ENCODE measurements at regions of chr11 and their contacts with region 1.

Region 1: DNA sequence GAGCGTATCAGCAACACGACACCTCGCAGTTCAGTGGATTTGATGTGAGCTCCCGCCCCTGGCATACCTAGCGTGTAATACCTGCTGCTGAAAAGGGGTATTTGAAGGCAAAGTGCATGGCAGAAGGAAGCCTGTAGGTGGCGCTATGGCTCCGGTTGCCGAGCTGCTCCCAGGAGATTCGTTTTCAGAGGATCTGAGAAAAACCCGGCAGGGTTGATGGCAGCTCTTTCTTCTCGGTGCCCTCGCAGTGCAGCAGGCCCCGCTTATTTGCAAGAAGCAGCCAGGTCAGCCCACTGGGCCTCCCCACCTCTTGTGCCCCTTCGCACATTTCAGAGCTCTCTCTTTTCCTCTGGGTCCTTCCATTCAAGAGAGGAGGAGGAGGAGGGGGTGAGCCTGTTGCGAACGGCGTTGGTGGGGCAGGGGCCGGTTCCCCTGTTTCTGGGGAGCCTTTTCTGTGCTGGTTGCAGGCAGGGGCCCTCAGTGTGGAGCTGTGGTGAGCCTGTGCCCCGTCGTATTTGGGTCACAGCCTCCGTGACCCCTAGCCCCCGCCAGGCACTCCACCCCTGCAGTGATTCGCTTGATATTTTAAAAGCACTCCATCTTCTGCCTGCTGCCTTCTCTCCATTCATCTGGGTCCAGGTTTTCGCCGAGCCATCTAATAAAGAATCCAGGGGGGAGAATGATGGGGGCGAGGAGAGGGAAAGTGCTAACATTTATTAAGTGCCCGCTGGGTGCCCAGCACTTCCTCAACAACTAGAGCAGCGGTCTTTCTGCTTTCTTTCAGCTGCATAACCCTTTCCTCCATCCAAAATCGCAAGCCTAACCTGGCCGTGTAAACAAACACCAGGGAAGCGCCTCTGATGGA is 85.3 kb upstream of the SYT13 start:
- DNase-seq: peak; percentile 63
- H3K4me3 Mint-ChIP-seq: no peak overlapping the region
- H3K27ac Mint-ChIP-seq: no peak overlapping the region
- H3K4me1 Mint-ChIP-seq: no peaks in the 10 kb centered on the region
- H3K27me3 Mint-ChIP-seq: peaks cover 9% of the 10 kb centered on the region

Region 2: GRCh38 chr11:45355706-45356041 is 15.8 kb before region 1 on chr11:
- CTCF ChIA-PET with region 1: interaction called, 15 read pairs
- POLR2A ChIA-PET with region 1: no interaction called
- DNase-seq: no peak
- H3K4me3 Mint-ChIP-seq: peak overlapping the region; percentile 64
- H3K27ac Mint-ChIP-seq: peak overlapping the region; percentile 51
- H3K4me1 Mint-ChIP-seq: peaks cover 15% of the 10 kb centered on the region
- H3K27me3 Mint-ChIP-seq: peaks cover 7% of the 10 kb centered on the region

Region 3: GRCh38 chr11:45383224-45383623 is 11.7 kb after region 1 on chr11:
- CTCF ChIA-PET with region 1: interaction called, 10 read pairs
- POLR2A ChIA-PET with region 1: no interaction called
- DNase-seq: no peak
- H3K4me3 Mint-ChIP-seq: no peak overlapping the region
- H3K27ac Mint-ChIP-seq: no peak overlapping the region
- H3K4me1 Mint-ChIP-seq: peaks cover 13% of the 10 kb centered on the region
- H3K27me3 Mint-ChIP-seq: peaks cover 6% of the 10 kb centered on the region

Region 4: DNA sequence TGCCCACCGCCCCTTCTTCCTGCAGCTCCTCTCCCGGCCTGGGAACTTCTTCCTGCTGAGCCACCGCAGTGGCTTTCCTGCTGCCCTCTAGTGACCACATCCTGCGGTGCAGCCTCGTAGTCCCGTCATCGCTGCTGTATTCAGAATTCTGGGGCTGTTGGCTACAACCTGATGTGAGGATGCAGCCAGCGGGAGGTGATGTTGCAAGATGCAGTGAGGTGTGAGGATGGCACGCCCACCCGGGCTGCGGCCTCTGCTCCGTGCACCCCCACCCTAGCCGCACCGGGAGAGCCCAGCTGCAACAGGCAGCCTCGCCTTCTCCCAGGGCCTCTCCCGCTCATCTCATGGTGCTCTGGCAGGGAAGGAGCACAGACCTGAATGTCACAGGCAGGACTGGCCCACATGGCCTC is 283.9 kb after region 1 on chr11:
- CTCF ChIA-PET with region 1: interaction called, 19 read pairs
- POLR2A ChIA-PET with region 1: no interaction called
- DNase-seq: peak; percentile 58
- H3K4me3 Mint-ChIP-seq: no peak overlapping the region
- H3K27ac Mint-ChIP-seq: no peak overlapping the region
- H3K4me1 Mint-ChIP-seq: no peaks in the 10 kb centered on the region
- H3K27me3 Mint-ChIP-seq: peaks cover 18% of the 10 kb centered on the region

Measured in activated CD4-positive, alpha-beta memory T cell treated with anti-CD3 and anti-CD28 coated beads, Interleukin-2, amount 10 ng/mL, durations not matched to agents 7 days and 5 days (primary cell).